Naive thymus-derived CD4-positive, alpha-beta T cell (primary cell): ENCODE measurements at regions of chr5 and their contacts with region 1.

Region 1: DNA sequence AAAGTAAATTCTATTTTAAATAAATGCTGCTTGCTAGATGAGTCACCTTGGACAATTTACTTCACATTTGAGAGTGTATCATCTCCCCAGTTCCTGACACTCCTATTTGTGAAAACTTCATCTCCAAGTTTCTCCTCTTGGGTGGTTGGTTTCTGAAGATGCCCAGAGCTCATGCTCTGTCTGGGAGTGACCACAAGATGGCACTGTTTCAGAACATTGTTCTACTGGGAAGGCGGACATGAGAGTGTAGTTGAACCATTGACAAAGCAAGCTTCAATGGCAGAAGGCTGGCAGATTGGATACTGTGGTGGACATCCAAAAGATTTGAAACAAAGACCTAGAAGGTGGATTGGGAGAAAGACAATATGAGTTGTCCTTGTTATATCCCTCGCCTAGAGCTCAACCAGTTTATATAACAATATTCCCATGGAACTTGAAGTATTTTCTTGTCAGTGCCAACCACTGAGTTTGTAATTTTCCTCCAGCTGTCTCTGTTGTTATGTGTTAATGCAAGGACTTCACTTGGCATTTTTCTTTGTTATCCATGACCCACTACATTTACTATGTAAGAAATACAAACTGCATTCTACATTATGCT is 234.3 kb upstream of the ANKH start:
- DNase-seq: peak in 3 of 9 donors; percentile 2 to 22 (median 6)
- ATAC-seq: peak; percentile 66
- H3K4me3 ChIP-seq: no peak overlapping the region
- H3K4me3 Mint-ChIP-seq: no peak overlapping the region
- H3K27ac ChIP-seq: no peak overlapping the region
- H3K27ac Mint-ChIP-seq: no peak overlapping the region
- H3K4me1 ChIP-seq: no peaks in the 10 kb centered on the region
- H3K4me1 Mint-ChIP-seq: peaks cover 0 to 6% (median 2%) of the 10 kb centered on the region in 7 donors
- H3K27me3 ChIP-seq: no peaks in the 10 kb centered on the region
- H3K27me3 Mint-ChIP-seq: peaks cover 0 to 4% (median 0%) of the 10 kb centered on the region in 5 donors

Region 2: DNA sequence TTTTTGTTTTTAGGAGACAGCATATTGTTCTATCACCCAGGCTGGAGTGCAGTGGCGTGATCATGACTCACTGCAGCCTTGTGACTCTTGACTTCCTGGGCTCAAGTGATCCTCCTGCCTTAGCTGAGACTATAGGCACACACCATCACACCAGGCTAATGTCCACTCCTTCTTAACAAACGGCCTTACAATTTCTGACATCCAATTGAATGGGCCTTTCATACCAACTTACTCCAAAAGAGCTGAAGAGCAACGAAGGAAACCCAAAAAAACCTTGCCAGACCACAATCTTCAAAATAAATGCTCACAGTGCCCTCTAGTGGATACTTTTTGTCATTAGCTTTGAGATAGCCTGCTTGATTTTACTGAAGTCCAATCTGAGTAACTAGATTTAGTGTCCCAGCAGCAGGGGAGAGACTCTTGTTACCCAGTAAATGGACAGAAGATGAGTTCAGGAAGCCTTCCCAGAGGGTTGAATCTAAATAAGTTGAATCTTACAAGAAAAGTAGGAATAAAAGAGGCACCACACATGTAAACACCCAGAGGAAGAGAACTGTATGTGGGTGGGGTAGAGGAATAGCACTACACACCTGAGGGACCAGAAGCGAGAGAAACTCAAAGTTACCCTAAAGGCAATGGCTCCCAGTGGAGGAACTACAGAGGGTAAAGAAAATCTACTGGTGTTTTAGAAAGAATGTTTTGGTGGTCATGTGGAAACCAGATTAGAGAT is 1350.4 kb after region 1 on chr5:
- CTCF ChIA-PET with region 1: no interaction called
- POLR2A ChIA-PET with region 1: no interaction called
- intact Hi-C with region 1: loop called in 1 of 2 experiments (anchors 10 kb)
- DNase-seq: peak in 7 of 9 donors; percentile 25 to 70 (median 59)
- ATAC-seq: peak; percentile 78
- H3K4me3 ChIP-seq: no peak overlapping the region
- H3K4me3 Mint-ChIP-seq: peak overlapping the region; percentile 6 to 80 (median 63)
- H3K27ac ChIP-seq: peak overlapping the region; percentile 28
- H3K27ac Mint-ChIP-seq: peak overlapping the region; percentile 3 to 84 (median 65)
- H3K4me1 ChIP-seq: peaks cover 9 to 20% of the 10 kb centered on the region in 2 donors
- H3K4me1 Mint-ChIP-seq: peaks cover 34 to 78% (median 64%) of the 10 kb centered on the region in 7 donors
- H3K27me3 ChIP-seq: no peaks in the 10 kb centered on the region
- H3K27me3 Mint-ChIP-seq: no peaks in the 10 kb centered on the region